ENCODE measurements at regions of chr12 and their contacts with region 1.

Region 1: DNA sequence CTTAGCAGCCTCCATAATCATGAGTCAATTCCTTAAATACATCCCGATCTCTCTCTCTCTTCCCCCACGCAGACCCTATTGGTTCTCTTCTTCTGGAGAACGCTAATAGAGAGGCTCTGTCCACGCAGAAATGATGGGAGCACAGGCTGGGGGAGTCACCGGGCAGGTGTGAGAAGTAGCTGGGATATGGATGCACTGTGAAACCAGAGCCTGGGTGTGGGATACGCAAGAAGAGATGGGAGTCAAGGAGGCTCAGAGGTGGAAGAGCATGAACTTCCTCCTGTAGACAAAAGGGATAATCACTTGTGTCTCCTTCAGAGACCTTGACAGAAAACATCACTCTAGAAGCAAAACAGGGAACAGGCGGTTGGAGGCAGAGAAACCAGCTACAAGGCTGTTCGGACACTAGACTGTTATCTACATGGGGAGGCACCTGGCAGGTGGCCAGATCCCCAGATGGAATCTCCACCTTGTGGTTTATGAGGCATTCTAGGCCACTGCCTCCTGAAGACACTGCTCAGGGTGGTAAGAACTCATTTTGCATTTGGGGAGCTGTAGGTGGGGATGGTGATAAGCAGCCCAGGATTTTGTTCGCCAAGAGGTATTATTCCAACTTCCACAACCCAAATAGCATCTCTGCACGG is 7.2 kb upstream of the SELPLG start:
- DNase-seq: peak; percentile 59
- ATAC-seq: peak; percentile 12; the same call in 1 of the 2 replicates
- H3K4me3 ChIP-seq: no peak overlapping the region
- H3K27ac ChIP-seq: no peak overlapping the region
- H3K4me1 ChIP-seq: peaks cover 10% of the 10 kb centered on the region
- H3K27me3 ChIP-seq: no peaks in the 10 kb centered on the region
- CTCF ChIP-seq: no peak
- POLR2A ChIP-seq: no peak; the same call in 1 of the 2 replicates
- RAD21 ChIP-seq: no peak

Region 2: GRCh38 chr12:108939594-108939993 is 298.7 kb after region 1 on chr12:
- CTCF ChIA-PET with region 1: no interaction called
- POLR2A ChIA-PET with region 1: no interaction called
- dilution Hi-C with region 1: no loop called
- in situ Hi-C with region 1: loop called (anchors 10 kb)
- intact Hi-C with region 1: no loop called
- DNase-seq: peak; percentile 13
- ATAC-seq: no peak
- H3K4me3 ChIP-seq: no peak overlapping the region
- H3K27ac ChIP-seq: no peak overlapping the region
- H3K4me1 ChIP-seq: no peaks in the 10 kb centered on the region
- H3K27me3 ChIP-seq: peaks cover 32% of the 10 kb centered on the region
- CTCF ChIP-seq: no peak
- POLR2A ChIP-seq: no peak
- RAD21 ChIP-seq: no peak

Region 3: DNA sequence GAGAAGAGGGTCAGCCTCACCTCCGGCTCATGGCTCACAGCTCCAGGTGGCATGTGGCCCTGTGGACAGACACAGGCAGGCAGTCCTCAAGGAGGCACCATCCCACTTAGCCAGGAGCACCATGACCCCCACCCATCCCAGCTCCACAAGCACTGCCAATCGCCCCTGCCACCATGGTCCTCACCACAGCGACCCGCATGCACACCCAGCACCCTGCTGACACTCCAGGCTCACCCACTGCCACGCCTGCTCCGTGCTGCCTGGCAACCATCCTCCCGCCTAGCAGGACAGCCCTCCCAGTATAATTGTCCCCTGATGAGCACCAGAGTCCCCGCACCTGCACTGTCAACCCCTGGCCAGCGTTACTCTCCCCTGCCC is 1141.4 kb after region 1 on chr12:
- CTCF ChIA-PET with region 1: no interaction called
- POLR2A ChIA-PET with region 1: no interaction called
- dilution Hi-C with region 1: no loop called
- in situ Hi-C with region 1: no loop called
- intact Hi-C with region 1: no loop called
- DNase-seq: no peak
- ATAC-seq: no peak
- H3K4me3 ChIP-seq: no peak overlapping the region
- H3K27ac ChIP-seq: no peak overlapping the region
- H3K4me1 ChIP-seq: no peaks in the 10 kb centered on the region
- H3K27me3 ChIP-seq: no peaks in the 10 kb centered on the region; the same call in 1 of the 2 replicates
- CTCF ChIP-seq: no peak
- POLR2A ChIP-seq: no peak
- RAD21 ChIP-seq: no peak

Measured in IMR-90 (cell line).